ENCODE measurements at regions of chr12 and their contacts with region 1.

Region 1: DNA sequence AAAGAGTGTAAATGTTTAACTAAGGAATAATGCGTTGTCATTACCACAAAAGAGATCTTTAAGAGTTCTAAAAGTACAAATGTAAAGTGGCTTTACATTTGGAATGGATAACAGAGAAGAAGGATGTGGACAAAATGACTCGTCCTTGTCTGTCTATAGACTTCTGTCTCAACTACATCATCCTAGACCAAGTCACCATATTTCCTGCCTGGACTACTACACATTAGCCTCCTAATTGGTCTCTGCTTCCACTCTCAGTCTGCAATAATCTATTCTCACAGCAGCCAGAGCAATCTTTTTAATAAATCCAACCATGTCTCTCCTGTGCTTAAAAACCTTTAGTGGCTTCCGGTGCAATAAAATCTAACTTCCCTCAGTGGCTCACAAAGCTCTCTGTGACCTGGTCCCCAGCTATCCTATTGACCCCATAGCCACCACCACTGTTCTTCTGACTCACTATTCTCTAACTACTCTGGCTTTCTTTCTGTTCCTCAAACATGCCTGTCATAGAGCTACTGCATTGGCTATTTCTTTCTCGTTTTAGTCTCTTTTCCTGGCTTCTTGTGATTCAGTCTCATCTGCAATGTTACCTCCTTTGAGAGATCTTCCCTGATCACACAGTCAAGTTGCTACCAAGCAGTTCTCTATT is 91.1 kb downstream of the MYF5 start:
- DNase-seq: no peak
- H3K4me3 ChIP-seq: no peak overlapping the region
- H3K27ac ChIP-seq: no peak overlapping the region
- H3K4me1 ChIP-seq: no peaks in the 10 kb centered on the region
- H3K27me3 ChIP-seq: no peaks in the 10 kb centered on the region
- CTCF ChIP-seq: no peak
- EP300 ChIP-seq: no peak
- POLR2A ChIP-seq: no peak

Region 2: GRCh38 chr12:80825506-80825905 is 17.7 kb after region 1 on chr12:
- intact Hi-C with region 1: loop called in 1 of 4 experiments (anchors 2 kb)
- DNase-seq: no peak
- H3K4me3 ChIP-seq: no peak overlapping the region
- H3K27ac ChIP-seq: no peak overlapping the region
- H3K4me1 ChIP-seq: no peaks in the 10 kb centered on the region
- H3K27me3 ChIP-seq: no peaks in the 10 kb centered on the region
- CTCF ChIP-seq: no peak
- EP300 ChIP-seq: no peak
- POLR2A ChIP-seq: no peak